Caco-2 (cell line): ENCODE measurements at regions of chr3 and their contacts with region 1.

Region 1: GRCh38 chr3:24012589-24013269 is 67.6 kb downstream of the NR1D2 start:
- DNase-seq: no peak
- H3K4me3 ChIP-seq: no peak overlapping the region
- H3K4me3 Mint-ChIP-seq: no peak overlapping the region
- H3K27ac Mint-ChIP-seq: no peak overlapping the region
- H3K4me1 ChIP-seq: no peaks in the 10 kb centered on the region
- H3K4me1 Mint-ChIP-seq: no peaks in the 10 kb centered on the region
- H3K27me3 ChIP-seq: no peaks in the 10 kb centered on the region
- H3K27me3 Mint-ChIP-seq: peaks cover 2% of the 10 kb centered on the region
- CTCF ChIP-seq: no peak

Region 2: DNA sequence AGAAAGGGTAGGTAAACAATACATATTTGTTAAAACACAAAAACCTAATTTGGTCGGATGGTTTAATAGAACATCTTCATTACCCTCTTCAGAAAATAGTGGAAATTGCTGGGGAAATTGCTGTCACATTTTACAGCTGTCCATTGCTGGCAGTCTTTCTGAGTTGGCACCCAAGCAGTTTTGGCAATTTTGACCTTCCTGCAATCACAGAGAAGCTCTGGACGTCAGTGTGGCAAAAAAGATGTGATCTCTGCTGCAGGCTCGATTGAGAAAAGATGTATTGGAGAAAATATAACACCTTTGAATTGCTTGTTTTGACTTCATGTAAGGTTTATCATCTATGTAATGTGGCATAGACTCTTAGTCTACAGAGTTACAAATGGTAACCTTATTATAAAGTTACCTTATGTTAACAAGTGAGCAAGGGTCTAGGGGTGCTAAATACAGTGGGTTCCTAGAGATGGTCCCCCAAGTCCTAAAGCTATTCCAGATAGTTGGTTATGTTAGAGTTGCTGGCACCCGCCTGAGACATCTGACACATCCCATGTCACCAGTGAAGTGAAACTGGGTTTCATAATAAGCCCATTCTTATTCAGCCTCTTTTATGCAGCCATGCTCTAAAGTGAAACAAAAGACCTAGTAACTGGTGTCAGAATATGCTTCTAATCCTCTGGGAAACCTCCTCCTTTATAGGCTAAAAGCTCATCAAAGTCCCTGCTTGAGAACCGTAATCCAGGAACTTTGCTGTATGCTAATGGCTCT is 192.9 kb before region 1 on chr3:
- CTCF ChIA-PET with region 1: no interaction called
- POLR2A ChIA-PET with region 1: no interaction called
- intact Hi-C with region 1: no loop called
- DNase-seq: no peak
- H3K4me3 ChIP-seq: no peak overlapping the region
- H3K4me3 Mint-ChIP-seq: no peak overlapping the region
- H3K27ac Mint-ChIP-seq: no peak overlapping the region
- H3K4me1 ChIP-seq: peaks cover 7% of the 10 kb centered on the region
- H3K4me1 Mint-ChIP-seq: peaks cover 23% of the 10 kb centered on the region
- H3K27me3 ChIP-seq: no peaks in the 10 kb centered on the region
- H3K27me3 Mint-ChIP-seq: no peaks in the 10 kb centered on the region
- CTCF ChIP-seq: no peak

Region 3: DNA sequence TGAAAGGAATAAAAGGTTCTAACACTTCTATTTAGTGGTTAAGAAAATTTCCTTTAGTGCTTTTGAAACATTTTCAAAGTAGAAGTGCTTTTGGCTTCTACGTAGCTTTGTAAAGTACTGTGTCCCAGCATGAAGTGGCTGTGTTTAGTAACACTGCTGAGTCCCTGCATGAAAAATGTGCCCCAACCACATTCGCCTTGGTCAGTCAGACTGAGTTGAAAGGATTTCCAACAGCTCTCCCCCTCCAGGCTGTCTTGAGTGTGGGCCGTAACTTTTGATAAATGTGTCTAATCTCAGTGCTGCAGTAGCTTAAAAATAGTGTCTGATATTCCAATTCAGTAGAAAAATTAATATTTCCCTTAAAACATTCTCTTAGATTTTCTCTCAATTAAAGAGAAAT is 47.3 kb after region 1 on chr3:
- CTCF ChIA-PET with region 1: no interaction called
- POLR2A ChIA-PET with region 1: no interaction called
- intact Hi-C with region 1: loop called (anchors 5 kb)
- DNase-seq: peak in 1 of 2 experiments; percentile 32
- H3K4me3 ChIP-seq: no peak overlapping the region
- H3K4me3 Mint-ChIP-seq: no peak overlapping the region
- H3K27ac Mint-ChIP-seq: no peak overlapping the region
- H3K4me1 ChIP-seq: no peaks in the 10 kb centered on the region
- H3K4me1 Mint-ChIP-seq: no peaks in the 10 kb centered on the region
- H3K27me3 ChIP-seq: no peaks in the 10 kb centered on the region
- H3K27me3 Mint-ChIP-seq: peaks cover 4% of the 10 kb centered on the region
- CTCF ChIP-seq: no peak